ENCODE measurements at regions of chr1 and their contacts with region 1.

Region 1: DNA sequence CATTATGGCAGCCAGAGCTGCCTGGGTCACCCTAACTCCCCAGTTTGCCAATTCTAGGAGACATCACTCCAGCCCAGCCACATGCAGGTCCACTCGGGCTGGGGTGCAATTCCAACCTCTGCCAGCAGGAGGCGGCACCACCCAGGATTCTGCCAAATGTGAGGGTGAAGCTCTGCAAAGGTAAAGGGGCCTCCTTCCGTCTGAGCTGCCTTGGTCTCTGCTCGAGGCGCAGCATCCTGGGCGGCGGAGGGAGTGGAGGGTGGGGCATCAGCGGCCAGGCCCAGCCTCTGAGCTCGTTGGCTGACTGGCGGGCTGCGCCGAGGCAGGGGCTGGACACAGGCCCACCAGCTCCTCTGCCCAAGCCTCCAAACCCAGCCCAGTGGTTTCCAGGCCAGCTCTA is 63.8 kb downstream of the ARHGEF16 start:
- DNase-seq: peak in 2 of 3 donors; percentile 22 to 42
- H3K4me3 ChIP-seq: no peak overlapping the region
- H3K27ac ChIP-seq: no peak overlapping the region
- H3K4me1 ChIP-seq: peaks cover 0 to 37% (median 21%) of the 10 kb centered on the region in 4 experiments
- H3K27me3 ChIP-seq: no peaks in the 10 kb centered on the region

Region 2: DNA sequence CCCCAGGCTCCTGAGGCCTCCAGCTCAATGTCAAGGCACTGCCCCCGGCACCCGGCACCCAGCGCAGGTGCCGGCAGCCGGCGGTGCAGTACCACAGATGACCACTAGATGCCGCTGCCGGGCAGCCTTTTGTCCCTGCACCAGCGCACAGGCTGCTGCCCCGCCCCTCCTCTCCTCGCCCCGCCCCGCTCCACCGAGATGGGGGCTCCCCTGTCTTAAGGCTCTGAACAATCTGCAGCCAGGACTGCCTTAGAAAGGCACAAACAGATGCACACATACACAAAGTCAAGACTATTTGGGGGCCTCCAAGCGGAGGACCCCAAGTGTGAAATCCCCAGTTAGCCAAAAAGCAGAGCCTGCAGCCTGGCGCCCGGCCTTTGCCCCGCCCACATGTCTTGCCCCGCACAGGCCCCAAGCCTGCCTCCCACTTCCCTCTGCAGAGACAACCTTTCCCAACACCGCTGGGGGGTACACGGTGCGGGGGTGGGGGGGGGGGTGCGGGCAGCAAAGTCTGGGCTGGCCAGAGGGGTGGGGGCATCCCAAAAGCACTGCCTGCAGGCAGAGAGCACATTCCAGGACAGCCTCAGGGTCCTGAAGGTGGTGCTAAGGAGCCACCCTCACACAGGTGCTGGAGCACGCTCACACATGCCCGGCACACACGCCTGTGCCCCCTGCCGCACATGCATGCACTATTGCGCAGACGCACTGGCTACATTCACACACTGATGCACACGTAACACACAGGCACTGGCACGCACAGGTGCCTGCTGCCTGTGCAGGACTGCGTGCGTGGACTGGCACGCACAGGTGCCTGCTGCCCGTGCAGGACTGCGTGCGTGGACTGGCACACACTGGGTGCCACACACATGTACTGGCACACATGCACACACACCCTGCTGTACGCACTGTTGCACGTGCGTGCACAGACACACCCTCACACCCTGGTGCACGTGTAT is 26.7 kb before region 1 on chr1:
- CTCF ChIA-PET with region 1: interaction called, 11 read pairs
- POLR2A ChIA-PET with region 1: no interaction called
- DNase-seq: peak; percentile 53 to 78 (median 77)
- H3K4me3 ChIP-seq: peak overlapping the region in 4 of 7 experiments; percentile 29 to 59 (median 38)
- H3K27ac ChIP-seq: no peak overlapping the region
- H3K4me1 ChIP-seq: peaks cover 0 to 8% (median 3%) of the 10 kb centered on the region in 4 experiments
- H3K27me3 ChIP-seq: no peaks in the 10 kb centered on the region

Region 3: DNA sequence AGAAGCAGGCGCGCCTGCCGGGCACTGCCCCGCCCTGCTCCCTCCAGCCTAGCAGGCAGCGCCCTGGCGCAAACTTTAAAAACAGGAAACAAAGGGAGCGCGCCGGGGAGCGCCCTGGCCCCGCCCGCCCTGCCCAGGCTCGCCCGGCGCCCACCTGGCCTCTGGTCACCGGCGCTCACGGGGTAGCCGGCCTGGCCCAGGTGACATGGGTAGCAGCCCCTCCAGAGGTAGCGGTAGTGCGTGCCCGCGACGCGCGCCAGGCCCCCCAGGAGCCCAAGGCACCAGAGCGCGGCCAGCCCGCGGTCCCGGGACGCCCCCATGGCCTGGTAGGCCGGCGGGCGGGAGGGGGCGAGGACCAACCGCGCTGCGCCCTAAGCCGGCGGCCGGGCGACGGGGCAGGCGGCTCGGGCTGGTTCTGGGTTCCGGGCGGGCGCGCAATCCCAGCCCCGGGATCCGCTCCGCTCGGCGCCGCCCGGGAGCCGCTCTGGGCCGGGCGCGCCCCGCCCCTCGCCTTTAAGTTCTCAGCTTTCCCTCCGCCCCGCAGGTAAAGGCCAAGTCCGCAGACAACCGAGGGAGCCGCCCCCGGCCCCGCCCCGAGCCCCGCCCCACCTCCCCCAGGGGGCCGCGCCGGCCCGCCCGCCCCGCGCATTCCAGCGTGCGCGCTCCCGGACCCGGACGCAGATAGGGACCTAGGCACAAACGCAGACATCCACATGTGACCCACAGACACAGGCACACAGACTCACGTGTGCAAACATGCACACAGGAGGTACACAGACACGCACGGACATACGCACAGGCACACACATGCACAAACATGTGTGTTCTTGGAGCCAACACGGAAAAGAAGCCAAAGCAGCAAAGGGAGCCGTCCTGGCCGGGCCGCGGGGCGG is 12.9 kb after region 1 on chr1:
- CTCF ChIA-PET with region 1: interaction called, 45 read pairs
- POLR2A ChIA-PET with region 1: interaction called, 9 read pairs
- DNase-seq: peak; percentile 52 to 82 (median 74)
- H3K4me3 ChIP-seq: peak overlapping the region; percentile 63 to 88 (median 76)
- H3K27ac ChIP-seq: no peak overlapping the region
- H3K4me1 ChIP-seq: peaks cover 0 to 20% (median 18%) of the 10 kb centered on the region in 4 experiments
- H3K27me3 ChIP-seq: no peaks in the 10 kb centered on the region

Measured in common myeloid progenitor, CD34-positive (primary cell).